Activated CD4-positive, alpha-beta T cell treated with anti-CD3 and anti-CD28 coated beads for 36 hours (primary cell): ENCODE measurements at regions of chr5 and their contacts with region 1.

Region 1: GRCh38 chr5:39177631-39177964 is 41.8 kb downstream of the FYB1 start:
- DNase-seq: no peak
- ATAC-seq: no peak
- H3K4me3 Mint-ChIP-seq: peak overlapping the region; percentile 59
- H3K27ac Mint-ChIP-seq: peak overlapping the region; percentile 80
- H3K4me1 Mint-ChIP-seq: peaks cover 94% of the 10 kb centered on the region
- H3K27me3 Mint-ChIP-seq: no peaks in the 10 kb centered on the region

Region 2: GRCh38 chr5:39164529-39165402 is 12.8 kb before region 1 on chr5:
- CTCF ChIA-PET with region 1: interaction called, 14 read pairs
- POLR2A ChIA-PET with region 1: interaction called, 4 read pairs
- intact Hi-C with region 1: loop called (anchors 1 kb)
- DNase-seq: peak; percentile 36
- ATAC-seq: peak; percentile 94
- H3K4me3 Mint-ChIP-seq: peak overlapping the region; percentile 51
- H3K27ac Mint-ChIP-seq: peak overlapping the region; percentile 97
- H3K4me1 Mint-ChIP-seq: peaks cover 90% of the 10 kb centered on the region
- H3K27me3 Mint-ChIP-seq: no peaks in the 10 kb centered on the region

Region 3: DNA sequence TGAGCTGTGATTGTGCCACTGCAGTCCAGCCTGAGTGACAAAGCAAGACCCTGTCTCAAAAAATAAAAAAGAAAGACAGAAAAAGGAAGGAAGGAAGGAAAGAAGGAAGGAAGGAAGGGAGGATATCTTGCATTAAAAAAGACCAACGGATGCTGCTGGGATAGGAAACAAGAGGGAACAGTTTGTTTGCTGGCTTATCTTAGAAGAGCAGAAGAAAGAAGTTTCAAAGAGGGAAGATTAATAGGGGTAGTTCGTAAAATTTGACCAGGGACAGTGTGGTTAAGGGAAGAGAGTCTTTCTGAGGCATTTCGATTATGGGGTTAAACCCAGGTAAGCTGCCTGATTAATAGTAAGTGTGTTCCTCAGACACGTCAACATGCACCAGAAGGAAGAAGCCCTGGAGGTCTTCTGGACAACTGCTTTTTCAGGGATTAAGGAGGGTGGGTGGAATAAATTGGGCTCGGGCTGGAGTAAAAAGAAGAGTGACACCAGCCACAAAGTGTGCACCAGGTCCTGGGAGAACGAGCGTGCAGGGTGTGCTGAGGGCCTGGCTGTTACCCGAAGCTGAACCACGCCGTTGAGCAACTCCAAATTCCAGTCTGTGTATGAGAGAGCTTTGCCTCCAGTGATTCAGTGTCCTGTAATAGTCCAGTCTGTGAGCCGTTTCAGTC is 17.0 kb after region 1 on chr5:
- CTCF ChIA-PET with region 1: interaction called, 18 read pairs
- POLR2A ChIA-PET with region 1: interaction called, 3 read pairs
- intact Hi-C with region 1: loop called (anchors 1 kb)
- DNase-seq: peak; percentile 52
- ATAC-seq: peak; percentile 24
- H3K4me3 Mint-ChIP-seq: peak overlapping the region; percentile 72
- H3K27ac Mint-ChIP-seq: peak overlapping the region; percentile 96
- H3K4me1 Mint-ChIP-seq: peaks cover 74% of the 10 kb centered on the region
- H3K27me3 Mint-ChIP-seq: no peaks in the 10 kb centered on the region

Region 4: GRCh38 chr5:39209924-39210323 is 32.3 kb after region 1 on chr5:
- CTCF ChIA-PET with region 1: interaction called, 22 read pairs
- POLR2A ChIA-PET with region 1: interaction called, 6 read pairs
- intact Hi-C with region 1: loop called in 1 of 2 experiments (anchors 2 kb)
- DNase-seq: peak; percentile 87
- ATAC-seq: peak; percentile 59
- H3K4me3 Mint-ChIP-seq: peak overlapping the region; percentile 67
- H3K27ac Mint-ChIP-seq: peak overlapping the region; percentile 95
- H3K4me1 Mint-ChIP-seq: peaks cover 84% of the 10 kb centered on the region
- H3K27me3 Mint-ChIP-seq: no peaks in the 10 kb centered on the region

Region 5: GRCh38 chr5:40404613-40405012 is 1227.0 kb after region 1 on chr5:
- CTCF ChIA-PET with region 1: no interaction called
- POLR2A ChIA-PET with region 1: no interaction called
- intact Hi-C with region 1: loop called in 1 of 2 experiments (anchors 10 kb)
- DNase-seq: no peak
- ATAC-seq: peak; percentile 28
- H3K4me3 Mint-ChIP-seq: peak overlapping the region; percentile 18
- H3K27ac Mint-ChIP-seq: peak overlapping the region; percentile 99
- H3K4me1 Mint-ChIP-seq: peaks cover 94% of the 10 kb centered on the region
- H3K27me3 Mint-ChIP-seq: no peaks in the 10 kb centered on the region